ENCODE measurements at regions of chrX and their contacts with region 1.

Region 1: GRCh38 chrX:19904778-19905367 is 17.5 kb upstream of the SH3KBP1 start:
- H3K4me3 Mint-ChIP-seq: no peak overlapping the region
- H3K27ac Mint-ChIP-seq: no peak overlapping the region
- H3K4me1 Mint-ChIP-seq: peaks cover 9% of the 10 kb centered on the region
- H3K27me3 Mint-ChIP-seq: no peaks in the 10 kb centered on the region

Region 2: DNA sequence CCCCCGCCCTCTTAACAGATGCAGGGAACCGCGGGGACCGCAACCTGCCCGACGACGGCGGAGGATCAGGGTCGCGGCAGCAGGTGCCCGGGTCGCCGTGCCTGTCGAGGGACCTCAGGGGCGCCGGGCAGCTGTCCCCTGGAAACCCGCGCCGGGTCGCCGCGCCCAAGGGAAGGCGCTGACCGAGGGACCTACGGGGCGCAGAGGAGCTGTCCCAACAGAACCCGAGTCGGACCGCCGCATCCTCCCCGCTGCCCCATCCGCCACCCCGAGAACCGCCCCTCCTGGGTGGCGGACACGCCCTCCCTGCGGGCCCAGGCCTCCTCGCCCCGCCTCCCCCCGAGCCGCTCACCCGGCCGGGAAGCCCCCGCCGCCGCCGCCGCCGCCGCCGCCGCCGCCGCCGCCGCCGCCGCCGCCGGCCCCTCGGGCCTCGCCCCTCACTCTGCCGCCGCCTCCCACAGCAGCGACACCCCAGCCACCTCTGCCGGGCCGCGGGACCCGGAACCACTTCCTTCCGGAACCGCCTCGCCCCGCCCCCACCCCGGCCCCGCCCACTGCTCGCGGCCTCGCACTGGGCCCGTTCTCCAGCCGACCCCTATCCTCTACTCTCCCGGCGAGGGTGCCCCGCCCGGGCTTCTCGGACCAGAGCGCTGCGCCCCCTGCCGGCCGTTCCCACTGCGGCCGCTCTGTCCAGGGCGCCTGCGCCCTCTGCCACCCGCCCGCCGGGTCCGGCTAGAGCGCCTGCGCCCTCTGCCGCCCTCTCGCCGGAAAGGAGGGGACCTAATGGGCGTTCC is 85.9 kb after region 1 on chrX and contains the start of gene BCLAF3:
- intact Hi-C with region 1: loop called (anchors 5 kb)
- H3K4me3 Mint-ChIP-seq: peak within 1 kb of the TSS; percentile 78
- H3K27ac Mint-ChIP-seq: peak within 1 kb of the TSS; percentile 82
- H3K4me1 Mint-ChIP-seq: peaks cover 18% of the 10 kb centered on the region
- H3K27me3 Mint-ChIP-seq: no peaks in the 10 kb centered on the region

Region 3: DNA sequence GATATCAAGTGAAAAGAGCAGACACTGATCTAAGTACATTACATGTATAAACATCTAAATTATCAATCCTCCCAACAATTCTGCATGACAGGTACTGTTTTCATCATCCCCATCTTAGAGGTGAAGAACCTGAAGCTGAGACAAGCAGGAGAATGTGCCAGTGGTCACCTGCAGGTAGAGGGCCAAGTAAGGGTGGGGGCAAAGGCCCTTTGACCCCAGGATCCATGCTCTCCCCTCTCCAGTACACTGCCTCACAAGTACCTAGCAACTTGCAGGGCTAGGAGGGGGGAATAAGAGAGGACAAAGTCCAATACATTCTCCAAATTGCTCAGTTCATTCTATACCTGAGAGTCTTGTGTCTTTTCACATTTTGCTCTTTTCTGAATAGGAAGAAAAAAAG is 220.1 kb after region 1 on chrX:
- intact Hi-C with region 1: loop called (anchors 5 kb)
- H3K4me3 Mint-ChIP-seq: no peak overlapping the region
- H3K27ac Mint-ChIP-seq: no peak overlapping the region
- H3K4me1 Mint-ChIP-seq: peaks cover 6% of the 10 kb centered on the region
- H3K27me3 Mint-ChIP-seq: no peaks in the 10 kb centered on the region